ENCODE measurements at regions of chr12 and their contacts with region 1.

Region 1: GRCh38 chr12:132834181-132834711 is 5.6 kb upstream of the GOLGA3 start:
- DNase-seq: peak; percentile 80
- H3K4me3 Mint-ChIP-seq: peak overlapping the region; percentile 33
- H3K27ac Mint-ChIP-seq: peak overlapping the region; percentile 91
- H3K4me1 Mint-ChIP-seq: peaks cover 26% of the 10 kb centered on the region
- H3K27me3 Mint-ChIP-seq: no peaks in the 10 kb centered on the region

Region 2: GRCh38 chr12:132771126-132771838 is 63.0 kb before region 1 on chr12:
- intact Hi-C with region 1: loop called (anchors 2 kb)
- DNase-seq: peak; percentile 83
- H3K4me3 Mint-ChIP-seq: peak overlapping the region; percentile 67
- H3K27ac Mint-ChIP-seq: peak overlapping the region; percentile 81
- H3K4me1 Mint-ChIP-seq: peaks cover 25% of the 10 kb centered on the region
- H3K27me3 Mint-ChIP-seq: no peaks in the 10 kb centered on the region